ENCODE measurements at regions of chr5 and their contacts with region 1.

Region 1: DNA sequence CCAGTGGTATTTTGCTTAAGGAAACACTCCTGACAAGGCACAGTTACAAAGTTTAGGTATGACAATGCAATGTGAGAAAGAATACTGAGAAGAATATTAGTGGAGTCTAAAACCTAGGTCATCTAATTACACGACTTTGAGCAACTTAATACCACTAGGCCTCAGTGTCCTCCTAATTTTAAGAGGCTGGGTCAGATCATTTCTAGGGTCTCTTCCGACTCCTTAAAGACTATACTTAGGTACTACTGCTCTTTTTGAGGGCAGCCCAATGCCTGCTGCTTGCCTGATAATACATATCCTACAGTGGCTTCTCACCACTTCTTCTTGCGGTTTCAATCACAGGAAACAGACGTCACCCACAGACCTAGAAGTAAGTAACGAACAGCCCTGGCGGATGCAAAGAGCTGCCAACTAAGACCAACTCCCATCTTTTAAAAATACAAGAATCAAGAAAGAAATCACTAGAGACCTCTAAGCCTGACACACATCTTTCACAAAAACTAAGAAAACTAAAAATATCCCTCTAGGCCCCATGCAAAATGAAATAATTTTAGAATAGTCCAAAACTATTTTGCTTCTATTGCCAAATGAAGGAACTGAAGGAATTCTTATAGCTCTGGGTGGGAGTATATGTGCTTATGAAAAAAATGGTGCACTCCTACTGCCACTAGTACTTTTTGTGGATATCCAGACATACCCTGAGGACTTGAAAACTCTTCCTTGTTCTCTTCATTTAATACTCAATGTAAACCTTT is 13.1 kb downstream of the DIAPH1 start:
- DNase-seq: no peak
- H3K4me3 ChIP-seq: no peak overlapping the region
- H3K27me3 ChIP-seq: no peaks in the 10 kb centered on the region
- CTCF ChIP-seq: no peak

Region 2: GRCh38 chr5:141590127-141590526 is 15.6 kb before region 1 on chr5:
- CTCF ChIA-PET with region 1: interaction called, 23 read pairs
- POLR2A ChIA-PET with region 1: interaction called, 13 read pairs
- DNase-seq: no peak
- H3K4me3 ChIP-seq: no peak overlapping the region
- H3K27me3 ChIP-seq: no peaks in the 10 kb centered on the region
- CTCF ChIP-seq: no peak